Heart left ventricle (tissue), 16 donors: ENCODE measurements at regions of chr11 and their contacts with region 1.

Region 1: GRCh38 chr11:114110952-114111947 is 51.7 kb downstream of the ZBTB16 start:
- DNase-seq: peak in 2 of 5 donors; percentile 59 to 73
- ATAC-seq: peak; percentile 30 to 72 (median 38)
- H3K4me3 ChIP-seq: peak overlapping the region in 9 of 12 donors; percentile 7 to 47 (median 36)
- H3K27ac ChIP-seq: peak overlapping the region; percentile 59 to 87 (median 74)
- H3K4me1 ChIP-seq: peaks cover 16 to 99% (median 71%) of the 10 kb centered on the region in 12 donors
- H3K27me3 ChIP-seq: no peaks in the 10 kb centered on the region
- CTCF ChIP-seq: peak in 1 of 12 donors; percentile 23
- POLR2A ChIP-seq: no peak

Region 2: DNA sequence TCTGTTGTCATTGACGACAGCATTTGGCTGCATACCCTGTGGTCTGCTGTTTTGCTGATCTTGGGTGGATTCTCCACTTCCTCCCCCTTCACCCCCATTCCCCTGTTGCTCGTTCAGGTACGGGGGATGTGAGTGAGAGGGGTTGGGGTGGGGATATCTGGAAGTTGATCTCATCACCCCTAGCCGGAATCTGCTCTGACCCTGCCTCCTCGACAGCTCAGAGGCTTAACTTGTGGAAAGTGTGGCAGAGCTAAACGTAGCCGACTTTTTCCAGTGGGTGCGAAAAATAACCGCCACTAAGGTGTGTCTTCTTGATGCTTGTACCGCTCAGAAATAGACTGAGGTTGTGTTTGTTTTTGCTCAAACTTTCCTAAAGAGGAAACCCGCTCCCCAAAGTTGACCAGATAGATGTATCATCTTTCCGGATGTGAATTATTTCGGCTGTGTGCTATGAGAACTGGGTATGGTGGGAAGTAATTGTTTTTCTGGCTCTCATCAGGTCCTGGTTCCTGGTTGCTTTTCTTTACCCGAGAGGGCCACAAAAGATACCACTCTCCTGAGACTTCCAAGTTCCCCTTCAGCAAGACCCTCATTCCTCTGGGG is 45.1 kb before region 1 on chr11:
- intact Hi-C with region 1: loop called in 6 of 10 experiments (anchors 5 to 10 kb)
- DNase-seq: no peak
- ATAC-seq: no peak
- H3K4me3 ChIP-seq: peak overlapping the region in 2 of 12 donors; percentile 76 to 99
- H3K27ac ChIP-seq: peak overlapping the region in 4 of 12 donors; percentile 4 to 100 (median 20)
- H3K4me1 ChIP-seq: peaks cover 24 to 96% (median 85%) of the 10 kb centered on the region in 12 donors
- H3K27me3 ChIP-seq: no peaks in the 10 kb centered on the region
- CTCF ChIP-seq: no peak
- POLR2A ChIP-seq: no peak

Region 3: GRCh38 chr11:114148013-114148382 is 36.7 kb after region 1 on chr11:
- intact Hi-C with region 1: loop called in 1 of 10 experiments (anchors 5 kb)
- DNase-seq: peak in 1 of 5 donors; percentile 63
- ATAC-seq: peak in 3 of 4 donors; percentile 42 to 54 (median 47)
- H3K4me3 ChIP-seq: no peak overlapping the region
- H3K27ac ChIP-seq: peak overlapping the region in 11 of 12 donors; percentile 1 to 83 (median 45)
- H3K4me1 ChIP-seq: peaks cover 10 to 100% (median 77%) of the 10 kb centered on the region in 12 donors
- H3K27me3 ChIP-seq: no peaks in the 10 kb centered on the region
- CTCF ChIP-seq: no peak
- POLR2A ChIP-seq: no peak

Region 4: DNA sequence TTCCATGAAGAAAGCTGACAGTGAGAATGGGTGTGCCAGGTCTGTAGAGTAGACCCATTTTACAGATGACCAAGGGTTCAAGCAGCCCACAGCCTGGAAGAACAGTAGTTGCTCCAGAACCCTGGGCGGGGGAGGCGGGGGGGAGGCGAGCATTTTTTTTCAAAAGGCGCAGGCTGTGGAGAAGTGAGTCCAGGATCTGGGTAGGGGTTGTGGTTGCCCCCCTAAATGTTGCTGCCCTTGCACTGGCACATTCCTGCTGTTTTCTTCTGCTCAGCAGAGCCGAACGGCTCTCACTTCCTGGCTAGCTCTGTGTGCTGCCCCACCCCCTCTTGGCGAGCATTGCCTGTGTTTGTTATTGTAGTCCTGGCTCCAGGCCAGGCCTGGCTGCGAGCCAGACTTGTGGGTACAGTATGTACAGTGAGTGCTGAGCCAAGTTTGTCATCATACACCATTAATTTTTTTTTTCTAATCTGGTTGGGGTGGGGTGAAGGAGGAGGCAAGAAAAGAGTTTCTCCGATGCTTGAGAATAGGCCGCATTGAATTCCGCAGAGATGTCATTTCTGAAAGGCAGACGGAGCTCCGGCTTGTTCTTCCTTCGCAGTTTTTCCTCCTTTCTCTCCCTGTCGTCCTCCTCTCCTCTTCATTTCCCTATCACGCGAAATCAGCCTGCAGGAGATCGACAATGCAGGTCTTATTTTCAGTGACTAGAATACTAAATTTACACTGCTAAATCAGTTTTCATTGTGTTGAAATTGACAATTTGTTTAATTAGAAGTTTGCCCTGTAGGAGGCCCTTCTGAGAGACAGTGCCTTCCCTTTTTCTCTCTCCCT is 48.8 kb after region 1 on chr11:
- intact Hi-C with region 1: loop called in 2 of 10 experiments (anchors 2 to 5 kb)
- DNase-seq: peak; percentile 98 to 100 (median 99)
- ATAC-seq: peak; percentile 65 to 80 (median 72)
- H3K4me3 ChIP-seq: peak overlapping the region in 11 of 12 donors; percentile 18 to 46 (median 33)
- H3K27ac ChIP-seq: peak overlapping the region; percentile 87 to 100 (median 98)
- H3K4me1 ChIP-seq: peaks cover 54 to 99% (median 90%) of the 10 kb centered on the region in 12 donors
- H3K27me3 ChIP-seq: no peaks in the 10 kb centered on the region
- CTCF ChIP-seq: peak in 1 of 12 donors; percentile 9
- POLR2A ChIP-seq: peak; percentile 33 to 79

Region 5: GRCh38 chr11:114472661-114473060 is 361.4 kb after region 1 on chr11:
- intact Hi-C with region 1: no loop called
- DNase-seq: no peak
- ATAC-seq: no peak
- H3K4me3 ChIP-seq: no peak overlapping the region
- H3K27ac ChIP-seq: no peak overlapping the region
- H3K4me1 ChIP-seq: no peaks in the 10 kb centered on the region
- H3K27me3 ChIP-seq: no peaks in the 10 kb centered on the region
- CTCF ChIP-seq: no peak
- POLR2A ChIP-seq: no peak